CD14-positive monocyte (primary cell): ENCODE measurements at regions of chr19 and their contacts with region 1.

Region 1: GRCh38 chr19:13169810-13170209 is 19.6 kb downstream of the IER2 start:
- DNase-seq: peak in 2 of 3 donors; percentile 8 to 33
- H3K4me3 ChIP-seq: no peak overlapping the region
- H3K4me3 Mint-ChIP-seq: no peak overlapping the region
- H3K27ac ChIP-seq: peak overlapping the region; percentile 18 to 98
- H3K27ac Mint-ChIP-seq: peak overlapping the region; percentile 43 to 94 (median 74)
- H3K4me1 ChIP-seq: peaks cover 68 to 75% of the 10 kb centered on the region in 2 donors
- H3K4me1 Mint-ChIP-seq: peaks cover 78% of the 10 kb centered on the region
- H3K27me3 ChIP-seq: no peaks in the 10 kb centered on the region
- H3K27me3 Mint-ChIP-seq: peaks cover 0 to 4% (median 0%) of the 10 kb centered on the region in 3 donors
- CTCF ChIP-seq: no peak

Region 2: GRCh38 chr19:13155472-13156359 is 14.1 kb before region 1 on chr19:
- intact Hi-C with region 1: loop called (anchors 2 kb)
- DNase-seq: peak; percentile 64 to 74 (median 67)
- H3K4me3 ChIP-seq: peak overlapping the region; percentile 90 to 100 (median 99)
- H3K4me3 Mint-ChIP-seq: peak overlapping the region; percentile 98 to 99
- H3K27ac ChIP-seq: peak overlapping the region; percentile 95 to 96
- H3K27ac Mint-ChIP-seq: peak overlapping the region; percentile 95 to 99 (median 98)
- H3K4me1 ChIP-seq: peaks cover 32 to 45% of the 10 kb centered on the region in 2 donors
- H3K4me1 Mint-ChIP-seq: peaks cover 35% of the 10 kb centered on the region
- H3K27me3 ChIP-seq: no peaks in the 10 kb centered on the region
- H3K27me3 Mint-ChIP-seq: peaks cover 0 to 13% (median 0%) of the 10 kb centered on the region in 3 donors
- CTCF ChIP-seq: no peak